ENCODE measurements at regions of chr17 and their contacts with region 1.

Region 1: DNA sequence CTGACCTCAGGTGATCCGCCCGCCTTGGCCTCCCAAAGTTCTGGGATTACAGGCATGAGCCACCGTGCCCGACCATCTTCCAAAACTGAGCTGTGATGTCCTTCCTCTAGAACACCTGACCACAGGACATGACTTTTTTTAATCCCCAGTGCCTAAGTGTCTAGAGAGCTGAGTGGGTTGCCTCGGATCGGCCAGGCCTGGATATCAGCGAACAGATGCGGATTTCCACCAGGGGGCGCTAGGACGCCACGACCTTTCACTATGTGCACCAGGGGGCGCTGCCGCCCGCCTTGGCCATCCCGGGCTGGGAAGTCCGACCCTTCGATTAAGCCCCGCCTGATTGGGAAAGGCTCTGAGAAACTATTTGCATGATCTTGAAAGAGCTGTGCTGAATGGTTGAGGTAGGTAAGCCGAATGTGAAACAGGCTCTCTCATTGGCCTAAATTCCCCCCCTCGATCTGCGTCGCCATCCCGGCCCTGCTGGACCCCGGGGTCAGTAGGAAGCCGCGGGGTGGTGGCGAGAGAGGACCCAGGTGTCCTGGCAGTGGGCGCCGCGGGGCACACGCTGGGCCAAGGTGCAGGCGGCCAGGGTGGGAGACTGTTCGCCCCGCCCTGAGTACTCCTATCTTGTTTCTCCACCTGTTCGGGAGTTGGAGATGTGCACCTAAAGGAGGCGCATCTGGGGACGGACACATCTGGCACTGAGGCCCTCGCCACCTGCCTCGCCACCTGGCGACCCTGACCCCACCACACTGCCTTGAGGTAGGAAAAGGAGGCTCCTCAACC is at the start of gene ACBD4:
- DNase-seq: peak; percentile 99 to 100
- ATAC-seq: peak; percentile 59 to 78
- H3K4me3 ChIP-seq: peak within 1 kb of the TSS; percentile 55
- H3K27ac ChIP-seq: peak within 1 kb of the TSS; percentile 82 to 93
- H3K4me1 ChIP-seq: peaks cover 33% of the 10 kb centered on the region
- CTCF ChIP-seq: peak; percentile 100
- EP300 ChIP-seq: no peak
- POLR2A ChIP-seq: peak; percentile 77
- RAD21 ChIP-seq: peak; percentile 99 to 100
- polyA plus RNA-seq, gene ACBD4: 11.2 and 11.4 TPM in 2 replicates

Region 2: DNA sequence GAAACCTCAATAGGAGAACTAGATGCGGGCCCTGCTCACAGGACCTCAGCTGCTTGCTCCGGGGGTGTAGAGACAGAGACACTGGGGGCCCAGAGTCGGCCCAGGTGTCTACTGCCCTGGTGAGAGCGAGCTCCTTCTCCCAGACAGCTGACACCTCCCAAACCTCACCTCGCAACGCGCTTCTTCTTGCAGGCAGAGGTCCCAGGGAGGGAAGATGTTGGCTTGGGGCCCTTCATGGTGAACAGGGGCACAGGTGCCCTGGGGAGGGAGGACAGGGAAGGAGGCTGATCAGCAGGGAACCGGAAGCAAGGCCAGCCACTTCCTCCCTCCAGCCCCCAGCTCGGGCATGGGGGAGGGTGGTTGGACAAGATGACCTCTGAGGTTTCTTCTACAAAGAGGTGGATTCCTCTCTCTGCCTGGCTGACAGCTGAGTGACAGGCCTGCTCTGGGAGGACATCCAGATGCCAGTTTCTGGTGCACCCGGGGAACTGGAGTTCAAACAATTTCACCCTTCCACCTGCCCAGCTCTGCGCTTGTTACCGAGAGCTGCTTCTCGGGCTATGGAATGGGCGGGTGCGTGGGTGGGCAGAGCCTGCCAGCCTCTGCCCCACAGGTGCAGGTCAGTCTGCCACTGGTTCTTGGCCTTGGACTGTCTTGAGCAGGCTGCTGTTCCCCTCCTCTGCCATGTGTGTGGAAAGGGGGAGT is 208.4 kb before region 1 on chr17:
- CTCF ChIA-PET with region 1: interaction called, 47 read pairs
- POLR2A ChIA-PET with region 1: no interaction called
- DNase-seq: no peak
- ATAC-seq: no peak
- H3K4me3 ChIP-seq: no peak overlapping the region
- H3K27ac ChIP-seq: no peak overlapping the region
- H3K4me1 ChIP-seq: no peaks in the 10 kb centered on the region
- CTCF ChIP-seq: no peak
- EP300 ChIP-seq: no peak
- POLR2A ChIP-seq: no peak
- RAD21 ChIP-seq: no peak

Region 3: GRCh38 chr17:45051060-45051719 is 84.2 kb before region 1 on chr17 and contains the start of gene DCAKD:
- CTCF ChIA-PET with region 1: interaction called, 24 read pairs
- POLR2A ChIA-PET with region 1: no interaction called
- DNase-seq: peak; percentile 93 to 97
- ATAC-seq: peak; percentile 97 to 99
- H3K4me3 ChIP-seq: peak within 1 kb of the TSS; percentile 54
- H3K27ac ChIP-seq: peak within 1 kb of the TSS; percentile 91 to 95
- H3K4me1 ChIP-seq: peaks cover 35% of the 10 kb centered on the region
- CTCF ChIP-seq: no peak
- EP300 ChIP-seq: no peak
- POLR2A ChIP-seq: peak; percentile 75
- RAD21 ChIP-seq: no peak
- polyA plus RNA-seq, gene DCAKD: 21.4 and 26.2 TPM in 2 replicates

Region 4: GRCh38 chr17:45110668-45111611 is 24.4 kb before region 1 on chr17:
- CTCF ChIA-PET with region 1: interaction called, 742 read pairs
- POLR2A ChIA-PET with region 1: interaction called, 9 read pairs
- DNase-seq: no peak
- ATAC-seq: peak in 1 of 2 experiments; percentile 22; a peak in 3 of 6 replicates
- H3K4me3 ChIP-seq: no peak overlapping the region
- H3K27ac ChIP-seq: peak overlapping the region in 1 of 2 experiments; percentile 48; a peak in 3 of 6 replicates
- H3K4me1 ChIP-seq: no peaks in the 10 kb centered on the region
- CTCF ChIP-seq: no peak
- EP300 ChIP-seq: no peak
- POLR2A ChIP-seq: no peak
- RAD21 ChIP-seq: no peak

Region 5: GRCh38 chr17:45190503-45191255 is 55.3 kb after region 1 on chr17:
- CTCF ChIA-PET with region 1: interaction called, 639 read pairs
- POLR2A ChIA-PET with region 1: no interaction called
- DNase-seq: no peak
- ATAC-seq: peak in 1 of 2 experiments; percentile 52; a peak in 1 of 6 replicates
- H3K4me3 ChIP-seq: no peak overlapping the region
- H3K27ac ChIP-seq: peak overlapping the region; percentile 58 to 86
- H3K4me1 ChIP-seq: peaks cover 48% of the 10 kb centered on the region
- CTCF ChIP-seq: no peak
- EP300 ChIP-seq: no peak
- POLR2A ChIP-seq: no peak
- RAD21 ChIP-seq: no peak

Region 6: GRCh38 chr17:45247429-45248131 is 112.2 kb after region 1 on chr17:
- CTCF ChIA-PET with region 1: interaction called, 23 read pairs
- POLR2A ChIA-PET with region 1: no interaction called
- DNase-seq: peak; percentile 99 to 100
- ATAC-seq: peak; percentile 79 to 91
- H3K4me3 ChIP-seq: peak overlapping the region; percentile 89
- H3K27ac ChIP-seq: peak overlapping the region; percentile 93 to 96
- H3K4me1 ChIP-seq: peaks cover 49% of the 10 kb centered on the region
- CTCF ChIP-seq: no peak
- EP300 ChIP-seq: peak; percentile 78 to 91; a peak in 3 of 5 replicates
- POLR2A ChIP-seq: peak; percentile 70
- RAD21 ChIP-seq: no peak; a peak in 1 of 5 replicates

Region 7: DNA sequence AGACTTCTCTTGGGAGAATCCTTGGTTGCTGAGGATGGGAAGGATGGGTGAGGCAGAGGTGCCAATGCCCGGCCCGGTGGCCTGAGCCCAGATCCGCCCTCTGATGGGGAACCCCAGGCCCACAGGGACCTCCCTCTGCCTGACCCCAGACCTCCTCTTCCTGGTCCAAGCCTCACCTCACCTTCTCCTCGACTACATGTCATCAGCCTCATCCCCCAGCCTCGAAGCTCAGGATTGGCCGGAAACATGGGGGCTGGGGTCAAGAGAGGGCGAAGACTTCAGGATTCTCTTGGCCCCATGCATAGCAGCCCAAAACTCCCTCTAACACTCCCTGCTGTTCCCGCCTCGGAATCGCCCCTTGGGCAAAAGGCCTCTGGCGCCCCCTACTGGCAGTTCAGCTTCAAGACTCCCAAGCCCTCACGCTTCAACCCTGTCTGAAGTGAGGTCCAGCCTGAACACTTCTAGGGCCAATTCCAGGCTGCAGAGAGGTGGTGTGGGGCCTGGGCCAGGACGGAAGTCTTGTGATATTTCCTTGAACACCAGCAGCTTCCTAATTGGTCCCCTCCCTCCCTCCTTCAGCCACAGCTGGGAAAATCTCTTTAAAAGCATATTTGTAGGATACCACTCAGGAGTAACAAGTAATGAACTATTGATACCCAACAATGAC is 250.1 kb after region 1 on chr17:
- CTCF ChIA-PET with region 1: interaction called, 11 read pairs
- POLR2A ChIA-PET with region 1: no interaction called
- DNase-seq: peak; percentile 91 to 94
- ATAC-seq: peak; percentile 93 to 97
- H3K4me3 ChIP-seq: no peak overlapping the region
- H3K27ac ChIP-seq: peak overlapping the region; percentile 79 to 97
- H3K4me1 ChIP-seq: peaks cover 50% of the 10 kb centered on the region
- CTCF ChIP-seq: peak; percentile 99
- EP300 ChIP-seq: no peak
- POLR2A ChIP-seq: no peak
- RAD21 ChIP-seq: peak; percentile 100

Measured in A549 (cell line).